Natural killer cell (primary cell): ENCODE measurements at regions of chr22 and their contacts with region 1.

Region 1: GRCh38 chr22:31630331-31631329 is 31.4 kb downstream of the PISD start:
- DNase-seq: peak; percentile 78 to 94
- ATAC-seq: peak; percentile 86 to 94 (median 90)
- H3K4me3 ChIP-seq: peak overlapping the region; percentile 70
- H3K4me3 Mint-ChIP-seq: peak overlapping the region; percentile 88
- H3K27ac ChIP-seq: peak overlapping the region; percentile 94
- H3K27ac Mint-ChIP-seq: peak overlapping the region; percentile 80 to 93
- H3K4me1 ChIP-seq: peaks cover 55% of the 10 kb centered on the region
- H3K4me1 Mint-ChIP-seq: peaks cover 44 to 45% of the 10 kb centered on the region in 2 donors
- H3K27me3 ChIP-seq: no peaks in the 10 kb centered on the region
- H3K27me3 Mint-ChIP-seq: no peaks in the 10 kb centered on the region
- CTCF ChIP-seq: no peak

Region 2: DNA sequence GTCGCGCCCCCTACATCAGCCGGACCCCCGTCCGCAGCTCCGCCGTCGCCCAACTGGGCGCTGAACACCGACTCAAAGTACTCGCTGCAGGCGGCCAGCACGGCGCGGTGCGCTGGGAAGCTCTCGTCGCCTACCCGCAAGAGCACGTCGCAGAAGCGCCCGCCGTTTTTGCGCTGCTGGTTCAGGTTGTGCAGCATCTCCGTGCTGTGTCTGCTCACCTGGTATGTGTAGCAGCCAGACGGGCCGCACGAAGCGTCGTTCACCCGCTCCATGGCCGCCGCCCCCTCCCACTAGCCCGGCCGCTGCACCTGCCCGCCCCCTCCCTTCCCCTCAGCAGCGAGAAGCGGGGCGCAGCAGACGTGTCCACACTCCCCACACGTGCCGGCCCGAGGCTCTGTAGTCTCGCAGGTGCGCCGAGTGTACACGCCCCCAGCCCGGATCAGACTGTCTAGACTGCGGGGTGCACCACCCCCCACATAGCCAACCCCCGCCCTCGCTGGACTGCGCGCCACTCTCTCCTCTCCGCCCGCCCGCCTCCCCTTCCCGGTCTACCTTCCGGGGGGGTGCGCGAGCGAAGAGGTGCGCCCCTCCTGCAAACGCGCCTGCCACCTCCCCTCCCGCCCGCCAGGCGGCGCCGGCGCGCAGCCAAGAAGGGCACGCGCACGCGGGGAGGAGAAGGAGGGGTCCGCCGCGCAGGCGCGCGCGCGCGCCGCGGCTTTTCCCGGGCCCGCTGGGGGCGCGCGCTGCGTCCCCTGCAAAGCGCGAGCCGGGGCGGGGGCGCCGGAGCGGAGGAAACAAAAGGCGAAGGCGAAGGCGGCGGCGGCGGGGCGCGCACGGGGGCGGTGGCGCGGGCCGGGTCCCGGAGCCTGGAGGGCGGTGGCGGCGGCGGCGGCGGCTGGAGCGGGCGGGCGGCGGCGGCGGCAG is 285.0 kb before region 1 on chr22:
- intact Hi-C with region 1: loop called (anchors 2 kb)
- DNase-seq: peak; percentile 85 to 97
- ATAC-seq: peak; percentile 73 to 87 (median 77)
- H3K4me3 ChIP-seq: peak overlapping the region; percentile 72
- H3K4me3 Mint-ChIP-seq: peak overlapping the region; percentile 85
- H3K27ac ChIP-seq: peak overlapping the region; percentile 8
- H3K27ac Mint-ChIP-seq: peak overlapping the region; percentile 76 to 82
- H3K4me1 ChIP-seq: peaks cover 60% of the 10 kb centered on the region
- H3K4me1 Mint-ChIP-seq: peaks cover 48 to 51% of the 10 kb centered on the region in 2 donors
- H3K27me3 ChIP-seq: no peaks in the 10 kb centered on the region
- H3K27me3 Mint-ChIP-seq: no peaks in the 10 kb centered on the region
- CTCF ChIP-seq: peak; percentile 81

Region 3: GRCh38 chr22:31451709-31452571 is 178.7 kb before region 1 on chr22:
- intact Hi-C with region 1: loop called (anchors 1 kb)
- DNase-seq: peak in 1 of 2 donors; percentile 57
- ATAC-seq: peak; percentile 53 to 71 (median 70)
- H3K4me3 ChIP-seq: no peak overlapping the region
- H3K4me3 Mint-ChIP-seq: no peak overlapping the region
- H3K27ac ChIP-seq: no peak overlapping the region
- H3K27ac Mint-ChIP-seq: peak overlapping the region; percentile 55 to 62
- H3K4me1 ChIP-seq: no peaks in the 10 kb centered on the region
- H3K4me1 Mint-ChIP-seq: peaks cover 11 to 12% of the 10 kb centered on the region in 2 donors
- H3K27me3 ChIP-seq: no peaks in the 10 kb centered on the region
- H3K27me3 Mint-ChIP-seq: no peaks in the 10 kb centered on the region
- CTCF ChIP-seq: no peak

Region 4: DNA sequence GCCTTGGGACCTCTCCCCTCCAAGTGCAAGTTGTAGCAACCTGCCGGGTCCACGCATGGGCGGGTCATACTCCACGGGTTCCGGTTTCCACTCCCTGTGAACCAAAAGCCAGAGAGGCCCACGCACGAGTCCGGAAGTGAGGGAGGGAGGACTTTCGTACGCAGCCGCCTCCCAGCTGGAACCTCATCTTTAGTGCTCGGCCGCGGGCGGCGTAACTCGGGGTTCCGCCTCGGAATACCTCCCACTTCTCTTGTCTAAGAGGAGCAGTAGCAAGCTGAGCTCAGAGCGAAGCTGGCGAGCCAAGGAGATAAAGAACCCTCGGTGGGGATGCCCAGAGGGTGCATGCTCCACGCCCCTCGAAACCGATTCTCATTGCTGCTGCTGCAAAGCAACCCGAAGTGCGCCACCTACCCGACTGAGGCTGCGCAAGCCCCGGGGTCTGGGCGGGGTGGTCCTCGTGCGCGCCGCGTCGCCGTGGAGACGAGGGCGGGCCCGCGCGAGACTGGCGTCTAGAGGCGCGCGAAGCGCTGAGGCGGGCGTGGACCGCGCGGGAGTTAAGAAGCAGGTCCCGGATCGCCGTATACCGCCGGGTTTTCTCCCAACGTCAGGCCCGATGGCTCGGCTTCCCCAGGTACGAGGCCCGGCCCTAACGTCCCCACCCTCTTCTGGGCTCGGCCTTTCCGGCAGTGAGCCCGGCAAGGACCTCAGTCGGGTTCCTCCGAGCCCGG is 134.5 kb before region 1 on chr22 and contains the start of gene SFI1:
- intact Hi-C with region 1: loop called (anchors 2 kb)
- DNase-seq: peak; percentile 93 to 98
- ATAC-seq: peak; percentile 88 to 95 (median 90)
- H3K4me3 ChIP-seq: peak within 1 kb of the TSS; percentile 77
- H3K4me3 Mint-ChIP-seq: peak within 1 kb of the TSS; percentile 93
- H3K27ac ChIP-seq: peak within 1 kb of the TSS; percentile 73
- H3K27ac Mint-ChIP-seq: peak within 1 kb of the TSS; percentile 92 to 94
- H3K4me1 ChIP-seq: peaks cover 31% of the 10 kb centered on the region
- H3K4me1 Mint-ChIP-seq: peaks cover 12% of the 10 kb centered on the region in 2 donors
- H3K27me3 ChIP-seq: no peaks in the 10 kb centered on the region
- H3K27me3 Mint-ChIP-seq: no peaks in the 10 kb centered on the region
- CTCF ChIP-seq: peak; percentile 17
- total RNA-seq, gene SFI1: 208 to 225 (median 217) TPM

Region 5: DNA sequence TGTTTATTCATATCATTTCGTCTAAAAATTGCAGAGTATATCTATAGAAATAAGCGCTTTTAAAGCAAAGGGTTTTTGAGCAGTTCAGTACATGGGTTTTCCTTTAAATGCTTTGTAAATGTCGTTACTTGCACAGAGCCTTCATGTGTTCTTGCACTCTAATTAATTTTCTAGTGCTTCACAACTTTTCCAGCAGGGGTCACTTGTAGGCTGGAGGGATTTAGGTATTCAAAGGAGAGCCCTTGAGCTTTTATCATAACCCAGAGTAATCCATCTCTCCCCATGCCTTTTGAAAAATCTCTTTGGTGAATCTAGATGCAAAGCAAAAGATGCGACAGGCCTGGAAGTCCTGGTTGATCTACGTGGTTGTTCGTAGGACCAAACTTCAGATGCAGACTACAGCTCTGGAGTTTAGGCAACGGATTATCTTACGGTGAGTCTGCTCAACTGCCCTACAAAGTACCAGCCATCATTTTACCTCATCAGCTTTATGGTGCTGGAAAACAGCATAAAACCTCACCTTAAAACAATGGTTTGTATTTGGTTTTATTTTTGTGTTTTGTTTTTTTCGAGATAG is 73.9 kb before region 1 on chr22:
- intact Hi-C with region 1: loop called (anchors 1 kb)
- DNase-seq: peak in 1 of 2 donors; percentile 49
- ATAC-seq: peak in 1 of 3 donors; percentile 52
- H3K4me3 ChIP-seq: no peak overlapping the region
- H3K4me3 Mint-ChIP-seq: no peak overlapping the region
- H3K27ac ChIP-seq: no peak overlapping the region
- H3K27ac Mint-ChIP-seq: no peak overlapping the region
- H3K4me1 ChIP-seq: peaks cover 7% of the 10 kb centered on the region
- H3K4me1 Mint-ChIP-seq: peaks cover 10 to 15% of the 10 kb centered on the region in 2 donors
- H3K27me3 ChIP-seq: no peaks in the 10 kb centered on the region
- H3K27me3 Mint-ChIP-seq: no peaks in the 10 kb centered on the region
- CTCF ChIP-seq: peak; percentile 40

Region 6: GRCh38 chr22:31585161-31585859 is 45.3 kb before region 1 on chr22:
- intact Hi-C with region 1: no loop called
- DNase-seq: peak in 1 of 2 donors; percentile 19
- ATAC-seq: no peak
- H3K4me3 ChIP-seq: no peak overlapping the region
- H3K4me3 Mint-ChIP-seq: no peak overlapping the region
- H3K27ac ChIP-seq: no peak overlapping the region
- H3K27ac Mint-ChIP-seq: no peak overlapping the region
- H3K4me1 ChIP-seq: peaks cover 2% of the 10 kb centered on the region
- H3K4me1 Mint-ChIP-seq: peaks cover 0 to 10% of the 10 kb centered on the region in 2 donors
- H3K27me3 ChIP-seq: no peaks in the 10 kb centered on the region
- H3K27me3 Mint-ChIP-seq: no peaks in the 10 kb centered on the region
- CTCF ChIP-seq: no peak